CD4-positive, alpha-beta memory T cell (primary cell): ENCODE measurements at regions of chr11 and their contacts with region 1.

Region 1: GRCh38 chr11:107898270-107898669 is 30.0 kb upstream of the RAB39A start:
- DNase-seq: peak in 4 of 5 donors; percentile 9 to 32 (median 23)
- H3K4me3 ChIP-seq: no peak overlapping the region
- H3K4me3 Mint-ChIP-seq: no peak overlapping the region
- H3K27ac ChIP-seq: no peak overlapping the region
- H3K27ac Mint-ChIP-seq: no peak overlapping the region
- H3K4me1 ChIP-seq: no peaks in the 10 kb centered on the region
- H3K4me1 Mint-ChIP-seq: no peaks in the 10 kb centered on the region
- H3K27me3 ChIP-seq: no peaks in the 10 kb centered on the region
- H3K27me3 Mint-ChIP-seq: peaks cover 0 to 9% of the 10 kb centered on the region in 2 donors

Region 2: DNA sequence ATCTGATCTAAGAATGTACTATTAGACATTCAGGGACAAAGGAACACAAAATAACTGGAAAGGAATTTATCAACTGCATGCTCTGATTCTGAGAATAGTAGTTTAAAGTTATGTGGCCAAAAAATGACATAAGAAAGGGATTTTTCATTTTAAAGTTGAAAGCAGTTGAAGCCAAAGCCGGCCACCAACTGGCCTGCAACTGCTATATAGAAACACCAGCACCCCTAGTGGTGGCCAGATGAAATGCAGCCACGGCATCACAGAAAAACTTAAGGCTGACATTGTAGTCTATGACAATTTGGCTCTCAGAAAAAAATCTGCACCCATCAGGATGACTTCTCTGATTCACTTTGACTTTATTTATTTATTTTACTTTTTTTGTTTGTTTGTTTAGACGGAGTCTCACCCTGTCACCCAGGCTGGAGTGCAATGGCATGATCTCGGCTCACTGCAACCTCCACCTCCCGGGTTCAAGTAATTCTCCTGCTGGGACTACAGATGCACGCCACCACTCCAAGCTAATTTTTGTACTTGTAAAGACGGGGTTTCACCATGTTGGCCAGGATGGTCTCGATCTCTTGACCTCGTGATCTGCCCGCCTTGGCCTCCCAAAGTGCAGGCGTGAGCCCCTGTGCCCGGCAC is 98.9 kb before region 1 on chr11:
- CTCF ChIA-PET with region 1: no interaction called
- POLR2A ChIA-PET with region 1: no interaction called
- intact Hi-C with region 1: loop called (anchors 10 kb)
- DNase-seq: peak; percentile 31 to 52 (median 43)
- H3K4me3 ChIP-seq: no peak overlapping the region
- H3K4me3 Mint-ChIP-seq: no peak overlapping the region
- H3K27ac ChIP-seq: no peak overlapping the region
- H3K27ac Mint-ChIP-seq: no peak overlapping the region
- H3K4me1 ChIP-seq: no peaks in the 10 kb centered on the region
- H3K4me1 Mint-ChIP-seq: peaks cover 0 to 2% (median 0%) of the 10 kb centered on the region in 4 donors
- H3K27me3 ChIP-seq: no peaks in the 10 kb centered on the region
- H3K27me3 Mint-ChIP-seq: no peaks in the 10 kb centered on the region